Psoas muscle (tissue), 8 donors: ENCODE measurements at regions of chr6 and their contacts with region 1.

Region 1: GRCh38 chr6:163711615-163712565 is 297.4 kb downstream of the QKI start:
- DNase-seq: peak; percentile 94 to 95
- ATAC-seq: peak; percentile 66 to 86 (median 82)
- H3K4me3 ChIP-seq: no peak overlapping the region
- H3K27ac ChIP-seq: peak overlapping the region; percentile 76
- H3K4me1 ChIP-seq: peaks cover 61% of the 10 kb centered on the region
- H3K27me3 ChIP-seq: no peaks in the 10 kb centered on the region
- CTCF ChIP-seq: peak; percentile 48

Region 2: DNA sequence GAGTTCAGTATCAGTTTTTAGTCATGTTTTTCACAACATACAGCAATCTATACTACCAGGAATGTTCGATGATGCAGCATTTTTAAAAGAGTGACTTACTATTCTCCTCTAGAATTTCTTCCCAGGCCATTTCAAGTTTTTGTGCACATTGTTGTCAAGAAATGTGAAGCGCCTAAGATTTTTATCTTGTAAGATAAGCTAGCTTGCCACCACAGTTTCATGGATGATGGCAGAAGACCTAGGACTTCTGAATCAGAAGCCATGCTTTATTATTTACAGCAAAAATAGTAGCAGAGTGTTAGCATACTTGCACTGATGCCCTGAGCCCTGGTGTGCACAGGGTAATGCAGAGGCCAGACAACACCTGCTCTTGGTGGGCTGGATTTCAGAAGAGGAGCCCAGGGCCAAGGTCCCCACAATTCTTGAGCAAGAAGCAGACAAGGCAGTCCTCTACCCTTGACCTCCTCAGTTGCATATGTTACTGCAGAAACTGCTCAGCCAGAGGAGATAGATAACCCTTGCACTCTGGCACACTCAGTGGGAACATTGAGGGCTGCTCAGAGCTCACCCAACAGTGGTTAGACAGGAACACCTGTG is 198.2 kb before region 1 on chr6:
- intact Hi-C with region 1: no loop called
- DNase-seq: no peak
- ATAC-seq: peak; percentile 44 to 80 (median 71)
- H3K4me3 ChIP-seq: no peak overlapping the region
- H3K27ac ChIP-seq: peak overlapping the region; percentile 51
- H3K4me1 ChIP-seq: peaks cover 78% of the 10 kb centered on the region
- H3K27me3 ChIP-seq: no peaks in the 10 kb centered on the region
- CTCF ChIP-seq: no peak

Region 3: GRCh38 chr6:163585932-163586437 is 125.9 kb before region 1 on chr6:
- intact Hi-C with region 1: loop called in 1 of 2 experiments (anchors 5 kb)
- DNase-seq: peak; percentile 65 to 86
- ATAC-seq: peak; percentile 81 to 85 (median 84)
- H3K4me3 ChIP-seq: peak overlapping the region; percentile 17
- H3K27ac ChIP-seq: peak overlapping the region; percentile 83
- H3K4me1 ChIP-seq: peaks cover 39% of the 10 kb centered on the region
- H3K27me3 ChIP-seq: no peaks in the 10 kb centered on the region
- CTCF ChIP-seq: no peak